HEK293T (cell line): ENCODE measurements at regions of chr6 and their contacts with region 1.

Region 1: DNA sequence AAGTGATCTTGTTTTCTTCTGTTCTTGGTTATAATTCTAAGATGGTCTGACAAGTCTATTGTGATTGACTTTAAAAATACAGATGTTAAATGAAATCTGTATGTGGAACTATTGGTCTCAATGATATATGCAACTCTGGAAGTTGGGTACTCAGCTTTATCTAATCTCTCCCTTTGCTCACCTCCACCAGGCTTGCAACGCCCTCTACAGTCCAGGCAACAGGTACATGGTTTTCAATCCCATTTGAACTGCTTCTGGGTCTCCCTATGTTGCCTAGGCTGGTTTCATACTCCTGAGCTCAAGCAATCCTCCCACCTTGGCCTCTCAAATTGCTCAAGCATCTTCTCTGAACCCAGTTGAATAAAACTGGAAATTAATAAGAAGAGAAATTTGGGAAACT is 25.6 kb upstream of the HLA-DQB1 start:
- DNase-seq: peak; percentile 43

Region 2: GRCh38 chr6:32517654-32518445 is 174.2 kb before region 1 on chr6:
- CTCF ChIA-PET with region 1: no interaction called
- POLR2A ChIA-PET with region 1: no interaction called
- DNase-seq: no peak

Region 3: DNA sequence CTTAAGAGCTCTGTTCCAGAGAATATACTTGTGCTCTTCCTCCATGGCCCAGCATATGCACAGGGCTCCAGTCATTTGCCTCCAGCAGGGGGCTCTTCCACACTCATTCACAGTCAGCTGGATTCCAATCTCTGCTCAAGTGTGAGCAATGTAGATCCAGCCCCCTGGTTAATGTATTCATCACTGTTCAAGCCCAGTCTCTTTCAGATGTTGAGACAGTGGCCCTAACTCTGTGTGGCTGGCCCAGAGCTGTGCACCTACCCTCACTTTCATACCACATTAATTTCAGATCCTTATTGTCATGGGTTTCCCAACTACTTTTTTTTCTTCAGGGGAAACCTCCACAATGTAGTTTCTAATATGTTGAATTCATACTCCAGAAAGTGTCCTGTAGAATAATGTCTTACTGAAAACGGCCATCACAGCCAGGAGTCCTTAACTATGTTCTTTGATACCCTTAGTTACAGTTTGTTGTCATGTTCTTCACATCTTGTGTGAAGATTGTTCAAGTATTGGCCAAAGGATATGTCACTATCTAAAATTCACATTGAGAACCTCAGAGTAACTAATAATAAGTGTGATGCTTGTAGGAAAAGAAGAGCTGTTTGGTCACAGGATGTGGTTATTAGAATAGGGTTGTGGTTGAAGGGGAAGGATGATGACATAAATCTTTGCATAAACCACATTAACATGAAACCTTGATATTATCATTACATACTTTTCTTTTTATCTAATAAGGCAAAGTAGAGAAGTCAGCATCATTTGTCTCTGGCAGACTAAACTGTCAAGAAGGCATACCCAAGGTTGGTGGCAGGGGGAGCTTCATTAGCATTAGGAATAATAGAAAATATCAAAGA is 69.2 kb before region 1 on chr6:
- CTCF ChIA-PET with region 1: interaction called, 15 read pairs
- POLR2A ChIA-PET with region 1: no interaction called
- DNase-seq: peak; percentile 70

Region 4: GRCh38 chr6:33410050-33410710 is 718.2 kb after region 1 on chr6:
- CTCF ChIA-PET with region 1: no interaction called
- POLR2A ChIA-PET with region 1: no interaction called
- DNase-seq: peak; percentile 94